AG04450 (cell line): ENCODE measurements at regions of chr17 and their contacts with region 1.

Region 1: GRCh38 chr17:10646392-10646990 is 10.6 kb downstream of the MYH3 start:
- DNase-seq: peak; percentile 49
- H3K4me3 ChIP-seq: no peak overlapping the region
- H3K27ac ChIP-seq: no peak overlapping the region
- H3K27me3 ChIP-seq: no peaks in the 10 kb centered on the region
- CTCF ChIP-seq: peak; percentile 94

Region 2: GRCh38 chr17:10516065-10516464 is 130.4 kb before region 1 on chr17:
- CTCF ChIA-PET with region 1: no interaction called
- POLR2A ChIA-PET with region 1: no interaction called
- DNase-seq: no peak
- H3K4me3 ChIP-seq: no peak overlapping the region
- H3K27ac ChIP-seq: no peak overlapping the region
- H3K27me3 ChIP-seq: no peaks in the 10 kb centered on the region
- CTCF ChIP-seq: no peak

Region 3: DNA sequence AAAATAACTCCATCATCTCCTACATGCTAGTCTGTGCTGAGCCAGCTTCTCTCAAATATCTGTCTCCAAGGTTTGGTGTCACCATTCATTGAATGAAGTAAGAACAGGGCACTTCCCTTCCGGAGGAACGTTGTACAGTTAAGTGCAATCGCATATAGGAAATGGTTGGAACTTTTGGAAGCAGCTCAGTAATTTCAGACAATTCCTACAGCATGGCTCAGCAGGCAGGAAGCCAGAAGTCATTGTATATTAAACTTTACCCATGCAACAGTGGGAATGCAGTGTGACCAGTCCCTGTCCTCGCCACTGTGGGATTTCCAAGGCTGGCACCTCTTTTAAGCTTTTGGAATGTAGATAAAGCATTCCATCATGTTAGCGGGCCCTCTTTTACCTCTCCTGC is 45.9 kb before region 1 on chr17:
- CTCF ChIA-PET with region 1: no interaction called
- POLR2A ChIA-PET with region 1: no interaction called
- DNase-seq: no peak
- H3K4me3 ChIP-seq: no peak overlapping the region
- H3K27ac ChIP-seq: no peak overlapping the region
- H3K27me3 ChIP-seq: no peaks in the 10 kb centered on the region
- CTCF ChIP-seq: no peak

Region 4: GRCh38 chr17:10631048-10631700 is 15.3 kb before region 1 on chr17:
- CTCF ChIA-PET with region 1: interaction called, 138 read pairs
- POLR2A ChIA-PET with region 1: no interaction called
- DNase-seq: no peak
- H3K4me3 ChIP-seq: no peak overlapping the region
- H3K27ac ChIP-seq: no peak overlapping the region
- H3K27me3 ChIP-seq: no peaks in the 10 kb centered on the region
- CTCF ChIP-seq: peak; percentile 88

Region 5: DNA sequence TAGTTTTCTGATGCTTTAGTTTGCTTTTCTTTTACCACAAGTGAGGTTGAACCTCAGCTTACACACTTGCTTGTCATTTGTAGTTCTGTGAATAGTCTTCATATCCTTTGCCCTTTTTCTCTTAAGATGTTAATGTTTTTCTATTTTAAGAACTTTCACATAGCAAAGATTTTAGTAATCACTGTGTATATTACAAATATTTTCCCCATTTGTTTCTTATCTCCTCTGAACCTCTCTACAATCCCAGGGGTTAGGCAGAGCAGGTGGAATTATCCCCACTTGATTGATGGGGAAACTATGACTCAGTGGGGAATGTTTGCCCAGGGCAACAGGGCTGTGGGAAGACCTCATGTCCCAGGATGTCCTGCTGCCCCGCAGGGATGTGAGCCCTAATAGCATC is 22.3 kb after region 1 on chr17:
- CTCF ChIA-PET with region 1: interaction called, 28 read pairs
- POLR2A ChIA-PET with region 1: no interaction called
- DNase-seq: peak; percentile 58
- H3K4me3 ChIP-seq: no peak overlapping the region
- H3K27ac ChIP-seq: peak overlapping the region; percentile 47
- H3K27me3 ChIP-seq: no peaks in the 10 kb centered on the region
- CTCF ChIP-seq: no peak

Region 6: DNA sequence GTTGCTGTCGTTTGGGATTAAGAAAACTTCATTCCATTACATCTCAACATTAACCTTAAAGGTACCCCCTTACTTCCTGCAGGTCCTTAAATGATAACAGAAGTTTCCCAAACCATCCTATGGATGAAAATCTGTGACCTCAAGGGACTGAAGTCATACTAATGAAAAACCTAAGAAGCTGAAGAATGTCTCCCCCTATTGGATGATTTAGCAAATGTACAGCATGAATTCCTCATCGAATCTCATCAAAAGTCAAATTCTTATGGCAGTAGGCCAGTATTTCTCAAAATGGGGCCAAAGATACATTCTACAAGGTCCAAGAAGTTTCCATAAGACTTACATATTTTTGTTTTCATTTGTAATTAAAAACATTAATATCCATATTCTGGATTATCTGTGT is 37.4 kb after region 1 on chr17:
- CTCF ChIA-PET with region 1: interaction called, 38 read pairs
- POLR2A ChIA-PET with region 1: no interaction called
- DNase-seq: no peak
- H3K4me3 ChIP-seq: no peak overlapping the region
- H3K27ac ChIP-seq: no peak overlapping the region
- H3K27me3 ChIP-seq: no peaks in the 10 kb centered on the region
- CTCF ChIP-seq: peak; percentile 54

Region 7: GRCh38 chr17:10729334-10730193 is 83.1 kb after region 1 on chr17 and contains the start of gene TMEM220:
- CTCF ChIA-PET with region 1: interaction called, 20 read pairs
- POLR2A ChIA-PET with region 1: no interaction called
- DNase-seq: peak; percentile 34
- H3K4me3 ChIP-seq: peak within 1 kb of the TSS; percentile 64
- H3K27ac ChIP-seq: peak within 1 kb of the TSS; percentile 68
- H3K27me3 ChIP-seq: peaks cover 2% of the 10 kb centered on the region
- CTCF ChIP-seq: no peak
- polyA plus RNA-seq, gene TMEM220: 5.2 and 6.1 TPM in 2 replicates

Region 8: GRCh38 chr17:10844621-10845387 is 198.3 kb after region 1 on chr17:
- CTCF ChIA-PET with region 1: interaction called, 77 read pairs
- POLR2A ChIA-PET with region 1: no interaction called
- DNase-seq: peak; percentile 24
- H3K4me3 ChIP-seq: peak overlapping the region; percentile 54
- H3K27ac ChIP-seq: no peak overlapping the region
- H3K27me3 ChIP-seq: no peaks in the 10 kb centered on the region
- CTCF ChIP-seq: peak; percentile 92